IMR-90 (cell line): ENCODE measurements at regions of chr1 and their contacts with region 1.

Region 1: DNA sequence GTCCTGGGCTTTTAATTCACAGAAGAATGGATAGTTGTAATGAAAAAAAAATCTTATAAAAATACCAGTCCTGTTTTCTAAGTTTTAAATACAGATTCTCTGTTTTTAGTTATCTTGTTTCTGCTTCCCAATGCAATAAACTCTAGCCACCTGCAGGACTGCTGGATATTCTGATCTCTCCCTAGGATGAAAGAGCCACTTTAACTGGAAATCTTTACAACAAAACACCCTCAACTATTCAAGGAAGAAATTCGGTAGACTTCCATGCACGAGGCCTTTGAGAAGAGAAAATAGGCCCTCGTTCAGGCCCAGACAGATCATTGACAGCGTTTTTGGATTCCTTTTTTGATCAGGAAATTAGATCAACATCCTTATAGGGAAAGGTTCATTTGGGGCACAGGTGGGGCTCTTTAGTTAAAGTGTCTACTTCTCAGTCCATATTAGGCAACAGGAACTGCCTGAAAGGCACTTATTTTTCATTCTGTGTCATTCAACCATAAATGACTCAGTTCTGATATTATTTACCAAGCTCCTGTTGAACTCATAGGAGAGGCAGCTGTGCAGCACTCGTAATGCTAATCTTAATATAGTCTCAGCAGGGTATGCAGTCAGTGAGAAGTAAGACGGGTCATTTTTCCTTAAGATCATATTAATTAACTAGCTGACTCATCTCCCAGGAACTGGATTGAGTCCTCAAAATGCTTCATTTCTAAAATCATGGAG is 71.1 kb upstream of the ERRFI1 start:
- DNase-seq: peak; percentile 96
- ATAC-seq: peak; percentile 77
- H3K4me3 ChIP-seq: no peak overlapping the region
- H3K27ac ChIP-seq: peak overlapping the region; percentile 78
- H3K4me1 ChIP-seq: peaks cover 22% of the 10 kb centered on the region
- H3K27me3 ChIP-seq: no peaks in the 10 kb centered on the region
- CTCF ChIP-seq: no peak
- POLR2A ChIP-seq: 0 out of 2 replicates have a peak, but pooled peaks have one; percentile 38
- RAD21 ChIP-seq: peak; percentile 31

Region 2: GRCh38 chr1:8004803-8005554 is 92.3 kb before region 1 on chr1:
- CTCF ChIA-PET with region 1: no interaction called
- POLR2A ChIA-PET with region 1: no interaction called
- dilution Hi-C with region 1: no loop called
- in situ Hi-C with region 1: no loop called
- intact Hi-C with region 1: no loop called
- DNase-seq: peak; percentile 98
- ATAC-seq: peak; percentile 85
- H3K4me3 ChIP-seq: no peak overlapping the region
- H3K27ac ChIP-seq: peak overlapping the region; percentile 96
- H3K4me1 ChIP-seq: peaks cover 12% of the 10 kb centered on the region
- H3K27me3 ChIP-seq: no peaks in the 10 kb centered on the region
- CTCF ChIP-seq: no peak
- POLR2A ChIP-seq: peak; percentile 19; the same call in 1 of the 2 replicates
- RAD21 ChIP-seq: peak; percentile 8; the same call in 1 of the 2 replicates

Region 3: DNA sequence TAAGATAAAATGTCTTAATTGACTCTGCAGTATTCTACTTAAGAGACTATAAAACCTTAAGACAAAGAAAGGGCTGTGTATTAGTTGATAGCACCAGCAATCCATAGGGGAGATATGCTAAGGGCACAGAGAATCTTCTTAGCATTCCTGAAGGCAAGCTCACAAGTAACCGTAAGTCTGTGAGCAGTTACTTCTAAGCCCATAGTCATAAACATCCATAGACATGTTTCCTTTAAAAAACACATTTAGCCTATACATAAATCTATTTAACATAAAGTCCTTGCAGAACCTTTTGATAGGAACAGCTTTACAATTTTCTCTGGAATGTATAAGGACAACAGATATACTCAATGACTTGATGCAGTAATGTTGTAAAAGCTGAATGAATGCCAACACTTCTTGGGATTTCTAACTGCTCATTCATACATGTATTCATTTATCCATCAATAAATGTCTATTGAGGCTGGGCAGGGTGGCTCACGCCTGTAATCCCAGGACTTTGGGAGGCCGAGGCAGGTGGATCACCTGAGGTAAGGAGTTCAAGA is 64.8 kb before region 1 on chr1:
- CTCF ChIA-PET with region 1: no interaction called
- POLR2A ChIA-PET with region 1: no interaction called
- dilution Hi-C with region 1: no loop called
- in situ Hi-C with region 1: no loop called
- intact Hi-C with region 1: loop called (anchors 2 kb)
- DNase-seq: peak; percentile 63
- ATAC-seq: peak; percentile 54
- H3K4me3 ChIP-seq: no peak overlapping the region
- H3K27ac ChIP-seq: no peak overlapping the region
- H3K4me1 ChIP-seq: peaks cover 5% of the 10 kb centered on the region
- H3K27me3 ChIP-seq: no peaks in the 10 kb centered on the region
- CTCF ChIP-seq: no peak
- POLR2A ChIP-seq: no peak
- RAD21 ChIP-seq: peak; percentile 14; the same call in 1 of the 2 replicates

Region 4: GRCh38 chr1:8137481-8138244 is 40.4 kb after region 1 on chr1:
- CTCF ChIA-PET with region 1: no interaction called
- POLR2A ChIA-PET with region 1: no interaction called
- dilution Hi-C with region 1: no loop called
- in situ Hi-C with region 1: no loop called
- intact Hi-C with region 1: loop called (anchors 2 kb)
- DNase-seq: peak; percentile 97
- ATAC-seq: peak; percentile 75
- H3K4me3 ChIP-seq: no peak overlapping the region; the same call in 1 of the 2 replicates
- H3K27ac ChIP-seq: peak overlapping the region; percentile 96
- H3K4me1 ChIP-seq: peaks cover 23% of the 10 kb centered on the region
- H3K27me3 ChIP-seq: no peaks in the 10 kb centered on the region; the same call in 1 of the 2 replicates
- CTCF ChIP-seq: no peak
- POLR2A ChIP-seq: no peak
- RAD21 ChIP-seq: peak; percentile 21; the same call in 1 of the 2 replicates

Region 5: DNA sequence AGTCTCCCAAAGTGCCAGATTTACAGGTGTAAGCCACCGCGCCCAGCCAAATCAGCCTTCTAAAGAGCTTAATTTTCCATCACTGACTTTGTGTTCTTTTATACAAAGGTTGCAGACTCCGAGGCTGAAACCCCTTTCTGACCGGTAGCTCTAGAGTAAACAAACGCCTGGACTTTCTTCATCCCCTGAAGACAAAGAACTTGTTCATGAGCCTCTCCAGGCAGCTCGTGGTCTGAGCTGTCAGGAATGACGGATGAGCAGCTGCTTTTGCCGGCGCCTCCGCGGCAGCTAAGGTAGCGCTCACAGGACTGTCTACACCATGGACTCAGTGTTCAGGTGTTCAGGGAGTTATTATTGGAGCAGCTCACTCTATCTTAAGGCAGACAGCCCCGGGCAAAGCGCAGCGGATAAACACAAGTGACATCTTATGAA is 57.4 kb after region 1 on chr1:
- CTCF ChIA-PET with region 1: no interaction called
- POLR2A ChIA-PET with region 1: no interaction called
- dilution Hi-C with region 1: no loop called
- in situ Hi-C with region 1: no loop called
- intact Hi-C with region 1: no loop called
- DNase-seq: peak; percentile 74
- ATAC-seq: peak; percentile 71
- H3K4me3 ChIP-seq: no peak overlapping the region
- H3K27ac ChIP-seq: 0 out of 2 replicates have a peak overlapping the region, but pooled peaks have one; percentile 6
- H3K4me1 ChIP-seq: peaks cover 3% of the 10 kb centered on the region
- H3K27me3 ChIP-seq: no peaks in the 10 kb centered on the region
- CTCF ChIP-seq: no peak
- POLR2A ChIP-seq: no peak
- RAD21 ChIP-seq: no peak

Region 6: GRCh38 chr1:8202182-8202905 is 105.1 kb after region 1 on chr1:
- CTCF ChIA-PET with region 1: no interaction called
- POLR2A ChIA-PET with region 1: no interaction called
- dilution Hi-C with region 1: no loop called
- in situ Hi-C with region 1: no loop called
- intact Hi-C with region 1: loop called (anchors 5 kb)
- DNase-seq: peak; percentile 97
- ATAC-seq: peak; percentile 77
- H3K4me3 ChIP-seq: peak overlapping the region; percentile 1; the same call in 1 of the 2 replicates
- H3K27ac ChIP-seq: peak overlapping the region; percentile 97
- H3K4me1 ChIP-seq: peaks cover 38% of the 10 kb centered on the region
- H3K27me3 ChIP-seq: no peaks in the 10 kb centered on the region
- CTCF ChIP-seq: no peak
- POLR2A ChIP-seq: no peak
- RAD21 ChIP-seq: peak; percentile 39

Region 7: GRCh38 chr1:8314346-8315280 is 217.4 kb after region 1 on chr1:
- CTCF ChIA-PET with region 1: no interaction called
- POLR2A ChIA-PET with region 1: no interaction called
- dilution Hi-C with region 1: no loop called
- in situ Hi-C with region 1: no loop called
- intact Hi-C with region 1: loop called (anchors 5 kb)
- DNase-seq: peak; percentile 77
- ATAC-seq: peak; percentile 86
- H3K4me3 ChIP-seq: no peak overlapping the region
- H3K27ac ChIP-seq: no peak overlapping the region; the same call in 1 of the 2 replicates
- H3K4me1 ChIP-seq: peaks cover 10% of the 10 kb centered on the region
- H3K27me3 ChIP-seq: no peaks in the 10 kb centered on the region
- CTCF ChIP-seq: peak; percentile 98
- POLR2A ChIP-seq: peak; percentile 70
- RAD21 ChIP-seq: peak; percentile 100

Region 8: DNA sequence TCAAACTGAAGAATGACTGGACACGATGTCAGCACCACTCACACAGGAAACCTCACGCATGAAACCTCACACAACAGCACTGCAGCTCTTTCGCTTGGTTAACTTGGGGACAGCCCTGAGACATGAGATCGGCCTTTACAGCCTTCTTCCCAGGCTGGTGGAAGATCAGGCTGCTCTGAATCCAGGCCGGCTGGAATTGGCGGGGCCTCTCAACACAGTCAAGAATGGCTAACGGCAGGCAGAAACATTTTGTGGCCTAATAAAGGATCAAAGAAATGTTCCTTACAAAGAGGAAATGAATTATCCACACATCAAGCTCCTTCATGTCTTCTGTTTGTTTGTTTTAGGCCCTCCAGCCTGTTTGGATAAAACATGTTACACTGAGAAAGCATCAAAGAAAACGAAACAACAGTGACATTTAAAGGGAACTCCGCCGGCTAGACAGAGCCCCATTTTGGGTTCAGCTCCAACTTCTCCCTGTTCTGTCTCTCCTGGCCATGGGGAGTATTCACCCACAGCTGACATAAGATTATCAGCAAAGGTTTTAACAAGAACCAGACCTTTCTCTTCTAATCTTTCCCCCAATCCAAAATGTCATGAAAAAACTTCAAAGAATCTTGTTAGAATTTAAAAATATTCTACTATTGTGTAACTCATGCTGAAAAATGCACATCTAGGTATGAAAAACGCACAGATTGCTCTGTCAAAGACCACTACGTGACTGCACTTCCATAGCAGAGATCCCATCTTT is 351.8 kb after region 1 on chr1:
- CTCF ChIA-PET with region 1: no interaction called
- POLR2A ChIA-PET with region 1: no interaction called
- dilution Hi-C with region 1: no loop called
- in situ Hi-C with region 1: no loop called
- intact Hi-C with region 1: no loop called
- DNase-seq: peak; percentile 63
- ATAC-seq: peak; percentile 73
- H3K4me3 ChIP-seq: peak overlapping the region; percentile 31; the same call in 1 of the 2 replicates
- H3K27ac ChIP-seq: peak overlapping the region; percentile 97
- H3K4me1 ChIP-seq: peaks cover 18% of the 10 kb centered on the region
- H3K27me3 ChIP-seq: no peaks in the 10 kb centered on the region
- CTCF ChIP-seq: no peak
- POLR2A ChIP-seq: no peak
- RAD21 ChIP-seq: no peak